CD4-positive, alpha-beta memory T cell (primary cell): ENCODE measurements at regions of chr3 and their contacts with region 1.

Region 1: DNA sequence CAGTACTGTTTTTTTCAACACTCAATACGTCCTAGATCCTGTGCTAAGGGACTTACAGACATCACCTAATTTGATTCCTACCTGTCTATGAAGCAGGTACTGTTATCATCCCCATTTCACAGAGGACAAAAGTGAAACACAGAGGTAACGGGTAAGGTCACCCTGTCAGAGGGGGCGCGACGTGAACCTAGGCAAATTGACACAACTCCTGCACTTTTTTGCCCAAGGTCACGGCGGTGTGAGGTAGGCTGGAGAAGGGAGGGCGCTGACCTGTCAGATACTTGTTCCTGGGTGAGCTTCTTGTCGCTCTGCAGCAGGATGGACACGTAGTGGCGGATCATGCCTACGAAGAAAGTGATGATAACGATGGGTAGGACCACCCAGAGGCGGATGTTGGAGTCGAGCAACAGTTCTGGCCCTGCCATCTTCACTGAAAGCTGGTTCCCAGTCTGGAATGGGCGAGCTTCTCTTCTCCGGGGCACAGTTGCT is 360 bp downstream of the EMC3 start:
- DNase-seq: no peak
- H3K4me3 ChIP-seq: peak overlapping the region; percentile 90 to 91
- H3K4me3 Mint-ChIP-seq: peak overlapping the region; percentile 95 to 99 (median 98)
- H3K27ac ChIP-seq: peak overlapping the region; percentile 96
- H3K27ac Mint-ChIP-seq: peak overlapping the region; percentile 98 to 100 (median 99)
- H3K4me1 ChIP-seq: peaks cover 31% of the 10 kb centered on the region
- H3K4me1 Mint-ChIP-seq: peaks cover 11 to 38% (median 27%) of the 10 kb centered on the region in 4 donors
- H3K27me3 ChIP-seq: no peaks in the 10 kb centered on the region
- H3K27me3 Mint-ChIP-seq: no peaks in the 10 kb centered on the region

Region 2: GRCh38 chr3:9704347-9705322 is 281.6 kb before region 1 on chr3:
- CTCF ChIA-PET with region 1: no interaction called
- POLR2A ChIA-PET with region 1: no interaction called
- intact Hi-C with region 1: no loop called
- DNase-seq: peak in 1 of 5 donors; percentile 8
- H3K4me3 ChIP-seq: no peak overlapping the region
- H3K4me3 Mint-ChIP-seq: peak overlapping the region; percentile 17 to 73 (median 56)
- H3K27ac ChIP-seq: no peak overlapping the region
- H3K27ac Mint-ChIP-seq: peak overlapping the region in 1 of 7 donors; percentile 18
- H3K4me1 ChIP-seq: peaks cover 10% of the 10 kb centered on the region
- H3K4me1 Mint-ChIP-seq: peaks cover 5 to 25% (median 9%) of the 10 kb centered on the region in 4 donors
- H3K27me3 ChIP-seq: no peaks in the 10 kb centered on the region
- H3K27me3 Mint-ChIP-seq: peaks cover 10 to 17% of the 10 kb centered on the region in 2 donors

Region 3: DNA sequence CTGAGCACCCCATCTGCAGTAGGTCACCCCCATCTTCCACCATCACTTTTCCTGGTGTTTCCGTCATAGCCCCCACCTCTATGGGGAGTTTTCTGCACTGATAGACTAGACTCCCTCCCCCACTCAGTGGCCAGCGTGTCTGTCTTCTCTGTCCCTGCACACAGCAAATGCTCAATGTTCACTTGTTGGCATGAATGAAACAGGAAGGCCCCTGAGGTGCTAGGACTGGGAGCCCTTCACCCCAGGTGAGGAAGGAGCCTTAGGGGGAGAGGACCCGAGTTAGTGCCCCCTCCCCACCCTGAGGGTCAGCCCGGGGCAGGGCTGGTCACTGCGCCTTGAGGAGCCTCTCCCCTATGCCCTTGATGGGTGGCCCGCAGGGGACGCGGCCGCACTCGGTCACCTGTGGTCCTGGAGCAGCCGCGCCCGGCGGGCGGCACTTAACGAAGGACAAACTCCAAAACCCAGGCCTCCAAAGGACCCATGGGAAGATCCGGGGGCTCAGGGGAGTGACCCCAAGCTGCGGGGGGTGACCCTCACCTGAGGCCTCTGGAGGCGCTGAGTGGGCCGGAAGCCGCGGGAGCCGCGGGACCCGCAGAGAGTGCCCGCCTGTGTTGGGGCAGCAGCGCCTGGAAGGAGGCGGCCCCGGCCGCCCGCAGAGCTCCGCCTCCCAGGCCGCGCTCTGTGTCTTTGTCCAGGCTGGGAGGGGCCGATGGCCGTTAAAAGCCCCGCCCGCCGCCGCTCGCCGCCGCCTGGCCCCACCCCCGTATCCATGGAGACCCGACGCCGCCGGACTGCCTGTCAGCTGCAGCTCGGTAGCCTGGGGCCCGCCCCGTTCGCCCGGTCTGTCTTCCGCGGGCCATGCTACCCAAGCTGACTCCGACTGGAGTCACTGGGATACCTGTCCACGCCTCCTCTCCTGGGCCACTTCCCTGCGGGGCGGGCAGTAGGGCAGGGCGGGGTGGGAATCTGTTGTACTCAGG is 24.5 kb after region 1 on chr3:
- CTCF ChIA-PET with region 1: no interaction called
- POLR2A ChIA-PET with region 1: interaction called, 5 read pairs
- intact Hi-C with region 1: loop called (anchors 2 kb)
- DNase-seq: peak; percentile 64 to 86 (median 65)
- H3K4me3 ChIP-seq: peak overlapping the region in 1 of 2 donors; percentile 46
- H3K4me3 Mint-ChIP-seq: peak overlapping the region; percentile 67 to 87 (median 75)
- H3K27ac ChIP-seq: no peak overlapping the region
- H3K27ac Mint-ChIP-seq: peak overlapping the region; percentile 11 to 91 (median 58)
- H3K4me1 ChIP-seq: peaks cover 22% of the 10 kb centered on the region
- H3K4me1 Mint-ChIP-seq: peaks cover 8 to 32% (median 17%) of the 10 kb centered on the region in 4 donors
- H3K27me3 ChIP-seq: no peaks in the 10 kb centered on the region
- H3K27me3 Mint-ChIP-seq: no peaks in the 10 kb centered on the region

Region 4: DNA sequence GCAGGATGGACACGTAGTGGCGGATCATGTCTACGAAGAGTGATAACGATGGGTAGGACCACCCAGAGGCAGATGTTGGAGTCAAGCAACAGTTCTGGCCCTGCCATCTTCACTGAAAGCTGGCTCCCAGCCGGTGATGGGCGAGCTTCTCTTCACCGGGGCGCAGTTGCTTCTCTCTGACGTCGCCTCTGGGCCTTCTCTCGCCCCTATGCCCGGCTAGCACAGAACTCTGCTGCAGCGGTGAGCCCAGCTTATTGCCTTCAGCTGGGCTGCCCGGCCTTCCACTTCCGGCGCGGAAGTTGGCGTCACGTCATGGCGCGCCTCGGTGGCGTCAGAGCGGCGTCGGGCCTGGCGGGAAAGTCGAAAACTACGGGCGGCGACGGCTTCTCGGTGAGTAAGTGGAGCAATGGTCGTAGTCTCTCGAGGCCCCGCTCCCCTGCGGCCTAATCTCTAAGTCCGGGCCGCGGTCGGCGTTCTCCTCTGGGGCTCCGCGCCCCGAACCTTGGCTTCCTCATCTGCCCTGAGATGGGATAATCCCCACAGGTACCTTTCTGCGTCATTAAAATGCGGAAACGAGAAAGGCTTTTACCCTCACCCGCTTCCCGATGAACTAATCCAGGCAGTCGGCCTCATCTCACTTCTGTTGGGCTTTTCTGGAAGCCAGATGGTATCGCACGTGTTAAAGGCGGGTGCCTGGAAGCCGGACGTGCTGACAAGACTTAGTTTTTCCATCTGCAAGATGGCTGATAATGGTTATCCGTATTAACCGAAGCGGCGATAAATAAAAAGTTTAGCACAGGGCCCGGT is 40.0 kb after region 1 on chr3 and contains the start of gene FANCD2:
- CTCF ChIA-PET with region 1: no interaction called
- POLR2A ChIA-PET with region 1: interaction called, 5 read pairs
- intact Hi-C with region 1: loop called (anchors 1 kb)
- DNase-seq: peak; percentile 91 to 96 (median 91)
- H3K4me3 ChIP-seq: peak within 1 kb of the TSS; percentile 84 to 88
- H3K4me3 Mint-ChIP-seq: peak within 1 kb of the TSS; percentile 94 to 99 (median 96)
- H3K27ac ChIP-seq: peak within 1 kb of the TSS; percentile 87
- H3K27ac Mint-ChIP-seq: peak within 1 kb of the TSS; percentile 97 to 99 (median 98)
- H3K4me1 ChIP-seq: peaks cover 25% of the 10 kb centered on the region
- H3K4me1 Mint-ChIP-seq: peaks cover 9 to 43% (median 19%) of the 10 kb centered on the region in 4 donors
- H3K27me3 ChIP-seq: no peaks in the 10 kb centered on the region
- H3K27me3 Mint-ChIP-seq: no peaks in the 10 kb centered on the region
- total RNA-seq, gene FANCD2: 28.1 to 28.3 TPM

Region 5: DNA sequence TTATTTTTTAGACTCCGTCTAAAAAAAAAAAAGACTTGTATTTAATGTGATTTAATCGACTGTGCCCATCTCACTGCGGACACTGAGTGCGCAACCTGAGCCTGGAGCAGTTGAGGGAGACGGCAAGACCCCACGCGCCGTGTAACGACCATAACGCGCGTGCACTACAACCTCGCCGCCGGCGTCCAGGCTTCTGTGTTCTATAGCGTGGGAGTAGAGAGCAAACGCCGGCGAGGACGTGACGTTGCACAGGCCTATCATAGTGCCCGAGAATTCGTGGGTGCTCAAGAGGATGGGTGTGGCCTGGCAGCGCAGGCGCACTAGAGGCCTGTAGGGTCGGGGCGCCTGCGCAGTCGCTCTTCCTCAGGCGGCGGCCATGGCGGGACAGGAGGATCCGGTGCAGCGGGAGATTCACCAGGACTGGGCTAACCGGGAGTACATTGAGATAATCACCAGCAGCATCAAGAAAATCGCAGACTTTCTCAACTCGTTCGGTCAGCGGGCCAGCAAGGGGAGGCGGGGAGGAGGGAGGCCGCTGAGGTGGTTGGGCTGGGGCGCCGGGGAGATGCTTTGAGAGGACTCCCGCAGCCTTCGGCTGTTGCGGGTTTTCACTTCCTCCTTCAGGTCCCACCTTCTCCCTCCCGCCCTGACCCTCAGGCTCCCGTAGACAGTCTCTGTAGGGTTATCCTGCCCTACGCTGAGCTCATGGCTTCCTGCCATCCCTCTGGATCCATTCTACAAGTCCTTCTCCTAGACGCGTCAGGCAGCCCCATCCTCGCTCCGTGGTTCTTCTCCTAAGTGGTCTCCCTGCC is 129.3 kb after region 1 on chr3 and contains the start of gene BRK1:
- CTCF ChIA-PET with region 1: no interaction called
- POLR2A ChIA-PET with region 1: no interaction called
- intact Hi-C with region 1: loop called (anchors 1 kb)
- DNase-seq: peak; percentile 89 to 95 (median 93)
- H3K4me3 ChIP-seq: peak within 1 kb of the TSS; percentile 89 to 98
- H3K4me3 Mint-ChIP-seq: peak within 1 kb of the TSS; percentile 95 to 100 (median 99)
- H3K27ac ChIP-seq: peak within 1 kb of the TSS; percentile 84
- H3K27ac Mint-ChIP-seq: peak within 1 kb of the TSS; percentile 96 to 100 (median 98)
- H3K4me1 ChIP-seq: peaks cover 39% of the 10 kb centered on the region
- H3K4me1 Mint-ChIP-seq: peaks cover 22 to 52% (median 31%) of the 10 kb centered on the region in 4 donors
- H3K27me3 ChIP-seq: no peaks in the 10 kb centered on the region
- H3K27me3 Mint-ChIP-seq: peaks cover 0 to 1% of the 10 kb centered on the region in 2 donors
- total RNA-seq, gene BRK1: 73.0 to 78.1 TPM

Region 6: GRCh38 chr3:10286596-10287330 is 300.5 kb after region 1 on chr3:
- CTCF ChIA-PET with region 1: interaction called, 3 read pairs
- POLR2A ChIA-PET with region 1: no interaction called
- intact Hi-C with region 1: loop called (anchors 10 kb)
- DNase-seq: peak in 3 of 5 donors; percentile 66 to 72 (median 66)
- H3K4me3 ChIP-seq: no peak overlapping the region
- H3K4me3 Mint-ChIP-seq: no peak overlapping the region
- H3K27ac ChIP-seq: no peak overlapping the region
- H3K27ac Mint-ChIP-seq: peak overlapping the region; percentile 2 to 57 (median 43)
- H3K4me1 ChIP-seq: peaks cover 23% of the 10 kb centered on the region
- H3K4me1 Mint-ChIP-seq: peaks cover 26 to 45% (median 29%) of the 10 kb centered on the region in 4 donors
- H3K27me3 ChIP-seq: no peaks in the 10 kb centered on the region
- H3K27me3 Mint-ChIP-seq: no peaks in the 10 kb centered on the region

Region 7: GRCh38 chr3:10322352-10322710 is 336.1 kb after region 1 on chr3:
- CTCF ChIA-PET with region 1: interaction called, 3 read pairs
- POLR2A ChIA-PET with region 1: interaction called, 11 read pairs
- intact Hi-C with region 1: loop called (anchors 1 kb)
- DNase-seq: peak in 3 of 5 donors; percentile 22 to 33 (median 23)
- H3K4me3 ChIP-seq: no peak overlapping the region
- H3K4me3 Mint-ChIP-seq: peak overlapping the region in 3 of 8 donors; percentile 20 to 92 (median 46)
- H3K27ac ChIP-seq: no peak overlapping the region
- H3K27ac Mint-ChIP-seq: peak overlapping the region in 5 of 7 donors; percentile 81 to 97 (median 86)
- H3K4me1 ChIP-seq: peaks cover 28% of the 10 kb centered on the region
- H3K4me1 Mint-ChIP-seq: peaks cover 18 to 42% (median 29%) of the 10 kb centered on the region in 4 donors
- H3K27me3 ChIP-seq: peaks cover 6% of the 10 kb centered on the region
- H3K27me3 Mint-ChIP-seq: peaks cover 2 to 5% of the 10 kb centered on the region in 2 donors